Activated CD8-positive, alpha-beta memory T cell treated with anti-CD3 and anti-CD28 coated beads, Interleukin-2, amount 10 ng/mL, durations not matched to agents 7 days and 5 days (primary cell): ENCODE measurements at regions of chr14 and their contacts with region 1.

Region 1: DNA sequence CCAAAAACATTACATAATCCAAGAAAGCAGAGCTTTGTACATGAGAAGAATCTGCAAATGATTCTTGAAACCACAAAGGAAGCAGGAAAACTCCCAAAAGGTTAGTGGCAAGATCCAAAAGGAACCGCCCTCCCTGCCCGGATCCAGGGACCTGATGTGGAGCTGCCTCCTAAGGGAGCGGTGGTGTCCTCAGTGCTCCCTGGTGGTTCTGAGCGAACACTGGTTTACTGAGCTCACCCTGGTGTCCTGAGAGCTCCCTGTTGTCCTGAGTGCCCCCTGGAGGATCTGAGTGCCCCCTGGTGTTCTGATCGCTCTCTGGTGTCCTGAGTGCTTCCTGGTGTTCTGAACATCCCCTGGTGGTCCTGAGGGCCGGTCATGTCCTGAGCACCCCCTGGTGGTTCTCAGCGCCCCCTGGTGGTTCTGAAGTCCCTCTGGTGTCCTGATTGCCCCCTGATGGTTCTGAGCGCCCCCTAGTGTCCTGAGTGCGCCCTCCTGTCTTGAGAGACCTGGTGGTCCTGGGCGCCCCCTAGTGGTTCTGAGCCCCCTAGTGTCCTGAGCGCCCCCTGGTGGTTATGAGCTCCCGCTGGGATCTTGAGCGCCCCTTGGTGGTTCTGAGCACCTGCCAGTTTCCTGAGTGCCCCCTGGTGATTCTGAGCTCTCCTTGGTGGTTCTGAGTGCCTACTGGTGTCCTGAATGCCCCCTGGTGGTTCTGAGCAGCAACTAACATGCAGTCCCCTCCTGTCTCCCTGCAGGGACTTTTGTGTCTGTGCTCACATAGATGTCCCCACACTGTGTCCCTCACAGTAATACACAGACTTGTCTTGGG is 891.1 kb downstream of the TMEM121 start:
- DNase-seq: peak; percentile 96
- ATAC-seq: peak; percentile 88
- H3K4me3 Mint-ChIP-seq: no peak overlapping the region
- H3K27ac Mint-ChIP-seq: no peak overlapping the region
- H3K4me1 Mint-ChIP-seq: no peaks in the 10 kb centered on the region
- H3K27me3 Mint-ChIP-seq: peaks cover 14% of the 10 kb centered on the region

Region 2: GRCh38 chr14:106210652-106211051 is 206.8 kb before region 1 on chr14:
- CTCF ChIA-PET with region 1: no interaction called
- DNase-seq: peak; percentile 51
- ATAC-seq: peak; percentile 42
- H3K4me3 Mint-ChIP-seq: no peak overlapping the region
- H3K27ac Mint-ChIP-seq: no peak overlapping the region
- H3K4me1 Mint-ChIP-seq: no peaks in the 10 kb centered on the region
- H3K27me3 Mint-ChIP-seq: peaks cover 78% of the 10 kb centered on the region

Region 3: DNA sequence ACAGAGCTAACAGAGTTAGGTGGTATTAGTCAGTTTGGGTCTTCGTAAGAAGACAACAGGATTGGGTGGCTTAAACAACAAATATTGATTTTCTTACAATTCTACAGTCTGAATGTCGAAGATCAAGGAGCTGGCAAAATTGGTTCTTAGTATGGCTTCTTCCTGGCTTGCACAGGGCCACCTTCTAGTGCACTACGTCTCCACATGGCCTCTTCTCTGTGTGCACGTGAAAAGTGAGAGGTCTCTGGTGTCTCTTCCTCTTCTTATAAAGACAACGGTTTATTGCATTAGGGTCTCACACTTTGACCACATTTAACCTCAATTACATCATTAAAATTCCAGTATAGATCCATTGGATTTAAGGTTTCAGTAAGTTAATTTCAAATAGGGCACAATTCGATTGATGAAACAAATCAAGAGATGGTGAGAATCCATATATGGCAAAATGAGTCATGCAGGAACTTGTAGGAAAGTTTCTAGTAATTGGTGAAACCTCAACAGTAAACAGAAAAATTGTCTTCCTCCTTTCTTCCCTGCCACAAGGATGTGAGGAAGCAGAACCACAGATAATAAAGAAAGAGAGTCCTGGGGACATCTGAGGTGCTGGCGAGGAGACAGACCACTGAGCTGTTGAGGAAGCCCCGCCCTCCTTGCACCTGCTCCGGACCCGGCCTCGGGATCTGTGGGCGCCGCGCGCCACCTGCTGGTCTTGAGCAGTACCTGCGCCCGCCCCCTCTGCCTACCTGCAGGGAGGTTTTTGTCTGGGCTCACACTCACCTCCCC is 44.4 kb before region 1 on chr14:
- CTCF ChIA-PET with region 1: interaction called, 58 read pairs
- DNase-seq: peak; percentile 87
- ATAC-seq: peak; percentile 97
- H3K4me3 Mint-ChIP-seq: peak overlapping the region; percentile 19
- H3K27ac Mint-ChIP-seq: no peak overlapping the region
- H3K4me1 Mint-ChIP-seq: peaks cover 28% of the 10 kb centered on the region
- H3K27me3 Mint-ChIP-seq: peaks cover 37% of the 10 kb centered on the region

Region 4: DNA sequence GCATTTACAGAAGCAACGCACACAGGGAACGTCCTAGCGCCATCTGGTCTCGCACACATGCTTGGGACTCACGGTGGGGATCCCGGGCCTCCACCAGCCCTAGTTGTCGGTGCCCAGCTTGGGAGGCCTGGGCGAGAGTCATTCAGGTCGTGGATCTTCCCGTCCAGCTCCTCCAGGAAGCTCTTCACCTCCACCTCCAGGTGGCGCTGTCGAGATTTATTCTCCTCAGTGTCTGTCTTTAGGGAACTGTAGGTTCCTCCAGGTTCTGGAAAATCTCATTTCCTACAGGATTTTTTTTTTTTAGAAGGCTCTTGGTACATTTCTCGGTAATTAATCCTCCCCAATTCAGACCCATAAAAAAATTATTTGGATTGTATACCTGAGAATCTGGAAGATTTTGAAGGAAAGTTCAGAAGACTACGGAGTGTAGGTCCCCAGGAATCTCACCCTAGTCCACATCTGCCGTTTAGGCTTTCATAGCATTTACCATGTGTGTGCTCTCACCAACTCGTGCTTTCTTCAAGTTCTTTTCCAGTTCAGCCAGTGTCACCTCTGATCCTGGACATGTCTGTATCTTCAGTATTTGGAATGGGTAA is 19.0 kb after region 1 on chr14:
- CTCF ChIA-PET with region 1: interaction called, 53 read pairs
- DNase-seq: peak; percentile 65
- ATAC-seq: no peak
- H3K4me3 Mint-ChIP-seq: no peak overlapping the region
- H3K27ac Mint-ChIP-seq: no peak overlapping the region
- H3K4me1 Mint-ChIP-seq: no peaks in the 10 kb centered on the region
- H3K27me3 Mint-ChIP-seq: peaks cover 15% of the 10 kb centered on the region

Region 5: GRCh38 chr14:106518054-106518943 is 100.9 kb after region 1 on chr14:
- CTCF ChIA-PET with region 1: interaction called, 21 read pairs
- DNase-seq: peak; percentile 89
- ATAC-seq: peak; percentile 70
- H3K4me3 Mint-ChIP-seq: no peak overlapping the region
- H3K27ac Mint-ChIP-seq: no peak overlapping the region
- H3K4me1 Mint-ChIP-seq: peaks cover 12% of the 10 kb centered on the region
- H3K27me3 Mint-ChIP-seq: peaks cover 58% of the 10 kb centered on the region

Region 6: GRCh38 chr14:106564058-106564656 is 146.7 kb after region 1 on chr14:
- CTCF ChIA-PET with region 1: interaction called, 14 read pairs
- DNase-seq: peak; percentile 79
- ATAC-seq: peak; percentile 61
- H3K4me3 Mint-ChIP-seq: no peak overlapping the region
- H3K27ac Mint-ChIP-seq: no peak overlapping the region
- H3K4me1 Mint-ChIP-seq: no peaks in the 10 kb centered on the region
- H3K27me3 Mint-ChIP-seq: peaks cover 65% of the 10 kb centered on the region

Region 7: DNA sequence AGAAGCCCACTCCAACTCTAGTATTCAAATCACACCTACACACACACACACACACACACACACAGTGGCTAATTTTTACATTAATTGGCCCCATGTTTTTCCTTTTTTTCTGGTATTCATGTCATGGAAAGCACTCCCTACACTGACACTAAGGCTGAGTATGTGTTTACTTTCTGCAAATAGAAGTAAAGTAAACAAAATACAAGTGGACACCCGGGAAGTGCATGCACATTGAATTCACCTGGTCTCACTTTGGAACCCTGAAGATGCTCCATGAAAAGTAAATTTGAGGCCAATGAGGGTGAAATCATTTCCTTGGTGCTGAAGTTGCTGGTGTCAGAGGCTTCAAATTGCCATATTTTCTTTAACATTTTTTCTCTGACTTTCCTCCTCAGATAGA is 193.8 kb after region 1 on chr14:
- CTCF ChIA-PET with region 1: no interaction called
- DNase-seq: no peak
- ATAC-seq: no peak
- H3K4me3 Mint-ChIP-seq: no peak overlapping the region
- H3K27ac Mint-ChIP-seq: no peak overlapping the region
- H3K4me1 Mint-ChIP-seq: peaks cover 12% of the 10 kb centered on the region
- H3K27me3 Mint-ChIP-seq: peaks cover 55% of the 10 kb centered on the region